ENCODE measurements at regions of chr2 and their contacts with region 1.

Region 1: DNA sequence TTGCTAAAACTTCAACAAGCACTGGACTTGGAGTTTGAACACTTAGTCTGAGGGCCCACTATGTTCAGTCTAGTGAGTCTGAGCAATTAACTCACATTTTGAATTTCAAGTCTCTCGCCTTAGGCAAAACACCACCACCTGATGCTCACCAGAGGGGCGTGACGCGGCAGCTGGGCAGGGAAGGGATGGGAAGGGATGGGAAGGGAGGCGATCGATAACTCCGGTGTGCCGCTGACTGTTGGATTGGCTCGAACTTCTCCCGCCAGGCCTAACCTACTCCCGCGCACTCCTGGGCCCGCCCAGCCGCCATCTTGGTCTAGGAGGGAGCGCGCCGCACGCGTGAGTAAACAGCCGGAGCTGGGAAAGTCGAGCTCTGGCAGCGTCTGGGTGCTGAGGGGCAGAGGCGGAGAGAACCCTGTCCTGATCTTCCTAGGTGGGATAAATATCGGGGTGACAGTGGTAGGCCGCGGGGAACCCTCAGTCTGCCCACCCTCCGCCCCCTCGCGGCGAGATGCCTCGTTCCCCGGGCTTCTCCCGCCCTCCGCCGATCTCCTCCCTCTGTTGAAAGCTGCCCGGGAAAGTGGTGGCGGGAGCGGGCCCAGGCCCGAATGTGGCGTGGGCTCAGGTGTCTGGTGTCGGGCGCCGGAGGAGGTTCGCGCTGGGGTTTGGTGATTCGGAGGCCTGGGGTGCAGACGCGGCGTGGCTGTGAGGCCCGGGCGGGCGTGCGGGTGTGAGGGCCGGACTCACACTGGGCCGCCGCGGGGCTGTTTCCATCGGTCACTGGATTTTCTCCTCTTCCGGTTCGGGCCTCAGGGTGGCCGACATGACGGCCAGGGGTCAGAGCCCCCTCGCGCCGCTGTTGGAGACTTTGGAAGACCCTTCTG is at the start of gene RIF1:
- DNase-seq: peak; percentile 86 to 90
- H3K4me3 ChIP-seq: peak within 1 kb of the TSS; percentile 81
- H3K27ac ChIP-seq: peak within 1 kb of the TSS; percentile 80
- H3K4me1 ChIP-seq: peaks cover 9% of the 10 kb centered on the region; the same call in 1 of the 2 replicates
- H3K27me3 ChIP-seq: no peaks in the 10 kb centered on the region
- CTCF ChIP-seq: peak; percentile 57; the same call in 1 of the 2 replicates
- total RNA-seq, gene RIF1: 39.4 and 47.2 TPM in 2 replicates

Region 2: GRCh38 chr2:151268085-151268484 is 141.8 kb before region 1 on chr2:
- CTCF ChIA-PET with region 1: interaction called, 24 read pairs
- POLR2A ChIA-PET with region 1: no interaction called
- intact Hi-C with region 1: no loop called
- DNase-seq: no peak
- H3K4me3 ChIP-seq: no peak overlapping the region
- H3K27ac ChIP-seq: no peak overlapping the region
- H3K4me1 ChIP-seq: no peaks in the 10 kb centered on the region
- H3K27me3 ChIP-seq: no peaks in the 10 kb centered on the region
- CTCF ChIP-seq: no peak

Region 3: DNA sequence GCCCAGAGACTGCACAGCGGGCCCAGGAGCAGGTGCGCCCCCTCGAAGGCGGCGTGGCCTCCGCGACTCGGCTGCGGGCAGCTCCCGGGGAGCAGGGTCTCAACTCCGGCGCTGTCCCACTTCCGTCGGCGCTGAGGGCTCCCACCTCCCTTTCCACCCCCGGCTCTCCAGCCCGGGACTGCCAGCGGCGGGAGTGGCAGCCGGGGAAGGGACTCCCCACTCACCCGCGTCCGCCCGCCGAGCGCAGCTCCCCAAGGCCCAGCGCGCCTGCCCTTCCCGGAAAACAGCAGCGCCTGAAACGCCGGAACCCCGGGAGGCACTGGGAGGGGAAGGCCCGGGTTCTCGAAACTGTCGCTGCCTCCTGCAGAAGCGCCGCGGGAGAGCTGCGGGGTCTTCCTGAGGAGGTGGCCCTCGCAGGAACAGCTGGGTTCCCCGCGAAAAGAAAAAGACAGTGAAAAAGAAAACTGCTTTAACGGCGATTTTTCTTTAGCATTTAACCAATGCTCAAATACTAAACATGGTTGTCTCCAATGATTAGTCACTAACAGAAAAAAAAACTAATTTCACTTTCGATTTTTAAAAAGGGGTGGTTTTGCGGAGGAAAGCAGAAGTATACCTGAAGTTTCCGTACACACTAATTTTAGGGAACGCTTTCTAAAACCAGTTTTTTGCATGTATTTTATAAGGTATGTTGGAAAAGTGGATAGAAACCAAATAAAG is 120.3 kb before region 1 on chr2 and contains the start of gene NMI:
- CTCF ChIA-PET with region 1: no interaction called
- POLR2A ChIA-PET with region 1: no interaction called
- intact Hi-C with region 1: loop called (anchors 1 kb)
- DNase-seq: peak; percentile 40 to 63
- H3K4me3 ChIP-seq: peak within 1 kb of the TSS; percentile 69
- H3K27ac ChIP-seq: peak within 1 kb of the TSS; percentile 94
- H3K4me1 ChIP-seq: peaks cover 19% of the 10 kb centered on the region
- H3K27me3 ChIP-seq: no peaks in the 10 kb centered on the region
- CTCF ChIP-seq: no peak
- total RNA-seq, gene NMI: 24.6 and 32.7 TPM in 2 replicates

Region 4: DNA sequence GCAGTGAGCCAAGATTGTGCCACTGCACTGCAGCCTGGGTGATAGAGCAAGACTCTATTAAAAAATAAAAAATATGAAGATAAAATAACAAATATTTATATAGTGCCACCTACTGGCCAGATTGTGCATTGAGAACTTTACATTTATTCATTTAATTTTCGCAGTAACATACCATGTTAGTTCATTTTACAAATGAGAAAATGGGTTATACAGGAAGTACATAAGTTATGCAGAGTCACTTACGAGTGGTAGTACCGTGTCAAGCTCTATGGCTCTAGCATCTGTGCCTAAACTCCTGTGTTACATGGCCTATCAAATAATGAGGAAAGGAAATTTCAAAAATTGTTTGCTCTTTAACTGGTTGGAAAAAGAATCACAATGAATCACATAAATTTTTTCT is 27.8 kb after region 1 on chr2:
- CTCF ChIA-PET with region 1: interaction called, 20 read pairs
- POLR2A ChIA-PET with region 1: no interaction called
- intact Hi-C with region 1: no loop called
- DNase-seq: no peak
- H3K4me3 ChIP-seq: no peak overlapping the region
- H3K27ac ChIP-seq: no peak overlapping the region
- H3K4me1 ChIP-seq: no peaks in the 10 kb centered on the region
- H3K27me3 ChIP-seq: no peaks in the 10 kb centered on the region
- CTCF ChIP-seq: peak; percentile 72